ENCODE measurements at regions of chr12 and their contacts with region 1.

Region 1: DNA sequence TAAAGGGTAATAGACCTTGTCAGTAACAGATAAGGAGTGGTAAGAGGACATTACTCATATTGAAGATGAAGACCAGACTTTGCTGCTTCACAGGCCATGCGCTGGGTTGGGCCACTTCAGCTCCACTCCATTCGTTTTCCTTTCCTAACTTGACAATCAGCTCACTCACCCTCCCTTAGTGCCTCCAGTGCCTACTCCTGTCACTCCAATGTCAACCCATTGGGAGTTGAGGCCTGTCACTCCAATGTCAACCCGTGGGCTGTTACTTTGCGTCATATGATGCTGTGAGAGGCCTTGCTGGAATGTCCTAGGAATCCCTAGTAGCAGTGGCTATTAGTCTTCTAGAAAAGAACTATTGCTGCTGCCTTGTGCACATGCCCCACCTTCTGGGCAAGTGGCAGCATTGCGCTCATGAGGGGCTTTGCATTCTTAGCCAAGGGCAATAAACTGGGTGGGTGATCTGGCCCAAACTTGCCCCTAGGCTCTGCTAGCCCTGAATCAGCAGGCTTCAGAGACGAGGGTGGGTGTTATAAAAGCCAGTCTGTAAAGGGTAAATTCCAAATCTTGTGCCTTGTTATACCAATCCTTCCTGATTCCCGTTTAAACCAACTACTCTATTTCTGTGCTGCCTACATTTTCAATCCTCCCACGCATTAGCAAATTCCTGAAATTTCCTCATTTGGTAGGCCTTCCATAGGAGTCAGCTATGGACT is 36.1 kb downstream of the BAZ2A start:
- DNase-seq: peak; percentile 77
- ATAC-seq: peak; percentile 64
- H3K4me3 Mint-ChIP-seq: no peak overlapping the region
- H3K27ac Mint-ChIP-seq: no peak overlapping the region
- H3K4me1 Mint-ChIP-seq: peaks cover 5% of the 10 kb centered on the region
- H3K27me3 Mint-ChIP-seq: no peaks in the 10 kb centered on the region

Region 2: GRCh38 chr12:56510786-56511185 is 83.3 kb before region 1 on chr12:
- CTCF ChIA-PET with region 1: interaction called, 188 read pairs
- POLR2A ChIA-PET with region 1: no interaction called
- DNase-seq: no peak
- ATAC-seq: no peak
- H3K4me3 Mint-ChIP-seq: no peak overlapping the region
- H3K27ac Mint-ChIP-seq: no peak overlapping the region
- H3K4me1 Mint-ChIP-seq: no peaks in the 10 kb centered on the region
- H3K27me3 Mint-ChIP-seq: peaks cover 8% of the 10 kb centered on the region

Region 3: GRCh38 chr12:56521590-56522371 is 72.3 kb before region 1 on chr12 and contains the start of gene RBMS2:
- CTCF ChIA-PET with region 1: interaction called, 18 read pairs
- POLR2A ChIA-PET with region 1: interaction called, 5 read pairs
- DNase-seq: peak; percentile 67
- ATAC-seq: peak; percentile 94
- H3K4me3 Mint-ChIP-seq: peak within 1 kb of the TSS; percentile 75
- H3K27ac Mint-ChIP-seq: peak within 1 kb of the TSS; percentile 82
- H3K4me1 Mint-ChIP-seq: peaks cover 31% of the 10 kb centered on the region
- H3K27me3 Mint-ChIP-seq: no peaks in the 10 kb centered on the region
- total RNA-seq, gene RBMS2: 4.8 to 5.5 TPM

Region 4: GRCh38 chr12:56571126-56571525 is 22.9 kb before region 1 on chr12:
- CTCF ChIA-PET with region 1: interaction called, 38 read pairs
- POLR2A ChIA-PET with region 1: no interaction called
- DNase-seq: no peak
- ATAC-seq: no peak
- H3K4me3 Mint-ChIP-seq: no peak overlapping the region
- H3K27ac Mint-ChIP-seq: no peak overlapping the region
- H3K4me1 Mint-ChIP-seq: peaks cover 28% of the 10 kb centered on the region
- H3K27me3 Mint-ChIP-seq: no peaks in the 10 kb centered on the region

Region 5: DNA sequence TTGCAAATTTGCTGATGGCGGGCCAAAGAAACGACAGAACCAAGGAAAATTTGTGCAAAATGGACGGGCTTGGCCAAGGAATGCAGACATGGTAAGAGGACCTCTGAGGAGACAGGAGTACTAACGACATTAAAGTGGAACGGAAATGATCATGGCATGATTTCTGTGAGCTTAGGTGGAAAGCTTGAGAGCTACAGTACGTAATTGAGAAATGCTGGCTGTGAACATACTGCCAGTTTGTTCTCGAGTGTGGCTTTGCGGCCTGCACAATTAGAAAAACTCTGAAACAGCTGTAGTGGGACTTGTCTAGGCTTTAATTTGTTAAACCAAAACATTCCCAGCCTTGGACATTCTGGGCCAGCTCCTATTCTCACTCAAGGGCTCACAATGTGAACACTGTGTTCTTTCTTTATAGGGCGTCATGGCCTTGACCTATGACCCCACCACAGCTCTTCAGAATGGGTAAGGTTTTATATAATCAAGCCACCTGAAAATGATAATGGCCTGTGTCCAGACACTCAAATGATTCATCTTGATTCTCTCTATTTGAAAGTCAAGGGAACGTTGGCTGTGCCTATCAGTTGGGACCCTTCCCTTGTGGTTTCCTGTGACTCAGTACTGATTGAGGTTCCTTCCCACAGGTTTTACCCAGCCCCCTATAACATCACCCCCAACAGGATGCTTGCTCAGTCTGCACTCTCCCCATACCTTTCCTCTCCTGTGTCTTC is 12.5 kb before region 1 on chr12:
- CTCF ChIA-PET with region 1: interaction called, 50 read pairs
- POLR2A ChIA-PET with region 1: no interaction called
- DNase-seq: peak; percentile 72
- ATAC-seq: peak; percentile 91
- H3K4me3 Mint-ChIP-seq: peak overlapping the region; percentile 53
- H3K27ac Mint-ChIP-seq: peak overlapping the region; percentile 86
- H3K4me1 Mint-ChIP-seq: peaks cover 34% of the 10 kb centered on the region
- H3K27me3 Mint-ChIP-seq: no peaks in the 10 kb centered on the region

Region 6: DNA sequence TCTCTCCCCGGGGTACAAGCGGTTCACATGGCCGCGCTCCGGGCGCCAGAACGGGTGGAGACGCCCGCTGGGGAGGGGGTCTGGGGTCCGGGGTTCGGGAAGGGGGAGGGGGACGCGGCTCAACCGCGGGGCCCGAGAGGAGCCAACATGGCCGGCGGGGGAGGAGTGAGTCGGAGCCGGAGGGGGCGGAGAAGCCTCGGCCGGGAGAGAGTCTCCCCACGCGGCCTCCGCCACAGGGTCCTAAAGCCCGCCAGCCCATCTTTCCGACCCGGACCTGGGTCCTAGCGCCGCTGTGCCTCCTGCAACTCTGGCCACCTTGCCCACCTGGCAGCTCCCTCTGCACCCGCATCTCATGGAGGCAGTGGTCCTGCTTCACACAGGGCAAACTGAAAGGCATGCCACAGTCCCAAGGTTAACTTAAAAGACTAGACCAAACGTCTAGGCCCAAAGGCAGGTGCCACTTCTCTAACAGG is 36.1 kb after region 1 on chr12 and contains the start of gene BAZ2A:
- CTCF ChIA-PET with region 1: interaction called, 34 read pairs
- POLR2A ChIA-PET with region 1: no interaction called
- DNase-seq: peak; percentile 92
- ATAC-seq: peak; percentile 74
- H3K4me3 Mint-ChIP-seq: peak within 1 kb of the TSS; percentile 84
- H3K27ac Mint-ChIP-seq: peak within 1 kb of the TSS; percentile 83
- H3K4me1 Mint-ChIP-seq: peaks cover 67% of the 10 kb centered on the region
- H3K27me3 Mint-ChIP-seq: no peaks in the 10 kb centered on the region
- total RNA-seq, gene BAZ2A: 92.2 to 96.0 TPM

Region 7: DNA sequence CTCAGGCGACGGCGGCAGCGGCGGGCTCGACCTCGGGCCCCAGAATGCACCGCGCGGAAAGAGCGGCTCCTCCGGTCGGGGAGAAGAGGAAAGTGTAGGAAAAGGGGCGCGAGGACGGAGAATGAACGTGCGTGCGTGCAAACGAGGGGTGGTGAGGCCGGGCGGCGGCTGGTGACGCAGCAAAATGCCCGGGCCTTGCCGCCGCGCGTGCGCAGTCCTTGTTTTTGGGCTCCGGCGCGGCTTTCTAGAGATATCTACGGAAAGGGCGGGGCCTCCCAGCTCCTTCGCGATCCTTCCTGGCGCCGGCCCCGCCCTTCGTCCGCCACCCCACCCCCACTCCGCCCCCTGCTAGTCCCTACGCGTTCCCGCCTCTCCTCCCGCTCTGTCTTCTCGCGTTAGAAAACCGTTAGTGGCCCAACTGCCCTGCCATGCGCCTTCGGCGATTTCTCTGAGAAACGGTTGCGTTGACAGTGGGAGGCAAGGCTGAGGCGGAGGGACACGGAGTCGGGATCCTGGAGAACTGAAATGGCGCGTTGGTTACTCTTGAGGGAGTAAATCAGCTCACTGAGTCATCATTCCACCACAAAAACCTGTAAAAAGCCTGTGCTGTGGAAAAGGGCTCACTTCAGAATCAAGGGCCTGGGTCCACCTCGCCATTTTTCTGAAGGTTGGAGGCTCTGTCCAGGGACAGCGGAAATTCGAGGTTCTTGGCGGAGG is 94.2 kb after region 1 on chr12 and contains the start of gene PTGES3:
- CTCF ChIA-PET with region 1: no interaction called
- POLR2A ChIA-PET with region 1: no interaction called
- DNase-seq: peak; percentile 99
- ATAC-seq: peak; percentile 76
- H3K4me3 Mint-ChIP-seq: peak within 1 kb of the TSS; percentile 99
- H3K27ac Mint-ChIP-seq: peak within 1 kb of the TSS; percentile 99
- H3K4me1 Mint-ChIP-seq: peaks cover 17% of the 10 kb centered on the region
- H3K27me3 Mint-ChIP-seq: no peaks in the 10 kb centered on the region
- total RNA-seq, gene PTGES3: 273 to 290 TPM

Region 8: DNA sequence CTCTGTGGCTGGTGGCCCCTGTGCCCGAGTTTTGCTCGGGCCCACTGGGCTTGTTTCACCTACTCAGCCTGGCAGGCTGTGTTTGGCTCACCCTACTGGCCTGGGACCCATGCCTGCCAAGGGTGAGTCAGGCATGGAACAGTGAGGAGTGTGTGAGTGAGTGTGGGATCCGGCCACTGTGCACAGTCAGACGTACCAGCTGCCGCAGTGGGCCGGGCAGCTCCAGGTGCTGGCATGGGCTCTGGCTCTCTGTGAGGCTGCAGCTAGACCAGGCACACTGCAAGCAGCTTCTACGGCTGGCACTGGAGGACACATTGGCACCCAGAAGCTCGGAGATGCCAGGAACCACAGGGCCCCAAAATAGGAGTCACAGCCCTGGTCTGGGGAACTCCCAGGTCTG is 209.7 kb after region 1 on chr12:
- CTCF ChIA-PET with region 1: no interaction called
- POLR2A ChIA-PET with region 1: no interaction called
- DNase-seq: no peak
- ATAC-seq: no peak
- H3K4me3 Mint-ChIP-seq: no peak overlapping the region
- H3K27ac Mint-ChIP-seq: no peak overlapping the region
- H3K4me1 Mint-ChIP-seq: no peaks in the 10 kb centered on the region
- H3K27me3 Mint-ChIP-seq: peaks cover 2% of the 10 kb centered on the region